B cell (primary cell): ENCODE measurements at regions of chr9 and their contacts with region 1.

Region 1: DNA sequence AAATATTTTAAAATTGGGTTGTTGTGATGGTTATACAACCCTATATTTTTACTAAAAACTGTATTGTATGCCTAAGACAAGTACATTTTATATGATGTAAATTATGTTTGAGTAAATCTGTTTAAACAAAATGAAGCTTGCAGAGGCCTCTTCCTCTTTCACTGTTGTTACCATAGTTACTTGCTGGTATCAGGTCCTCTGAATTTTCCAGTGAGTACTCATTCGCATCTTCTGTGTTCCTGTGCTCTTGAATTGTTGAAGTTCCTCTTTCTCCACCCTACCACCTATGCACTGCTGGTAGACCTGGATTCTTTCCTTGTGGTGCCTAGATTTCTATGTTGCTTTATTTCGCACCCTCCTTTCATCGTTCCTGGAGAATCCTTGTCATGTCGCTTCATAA is 938.5 kb upstream of the ACO1 start:
- DNase-seq: peak; percentile 62
- ATAC-seq: peak; percentile 82
- H3K4me3 ChIP-seq: no peak overlapping the region
- H3K4me3 Mint-ChIP-seq: peak overlapping the region; percentile 23
- H3K27ac ChIP-seq: peak overlapping the region; percentile 16 to 24
- H3K27ac Mint-ChIP-seq: peak overlapping the region; percentile 82
- H3K4me1 ChIP-seq: peaks cover 12 to 18% of the 10 kb centered on the region in 2 donors
- H3K4me1 Mint-ChIP-seq: peaks cover 22% of the 10 kb centered on the region
- H3K27me3 ChIP-seq: no peaks in the 10 kb centered on the region
- H3K27me3 Mint-ChIP-seq: no peaks in the 10 kb centered on the region
- CTCF ChIP-seq: no peak

Region 2: GRCh38 chr9:31259824-31260223 is 186.1 kb before region 1 on chr9:
- CTCF ChIA-PET with region 1: no interaction called
- POLR2A ChIA-PET with region 1: no interaction called
- intact Hi-C with region 1: loop called (anchors 10 kb)
- DNase-seq: no peak
- ATAC-seq: no peak
- H3K4me3 ChIP-seq: no peak overlapping the region
- H3K4me3 Mint-ChIP-seq: no peak overlapping the region
- H3K27ac ChIP-seq: no peak overlapping the region
- H3K27ac Mint-ChIP-seq: no peak overlapping the region
- H3K4me1 ChIP-seq: no peaks in the 10 kb centered on the region
- H3K4me1 Mint-ChIP-seq: no peaks in the 10 kb centered on the region
- H3K27me3 ChIP-seq: no peaks in the 10 kb centered on the region
- H3K27me3 Mint-ChIP-seq: no peaks in the 10 kb centered on the region
- CTCF ChIP-seq: no peak

Region 3: DNA sequence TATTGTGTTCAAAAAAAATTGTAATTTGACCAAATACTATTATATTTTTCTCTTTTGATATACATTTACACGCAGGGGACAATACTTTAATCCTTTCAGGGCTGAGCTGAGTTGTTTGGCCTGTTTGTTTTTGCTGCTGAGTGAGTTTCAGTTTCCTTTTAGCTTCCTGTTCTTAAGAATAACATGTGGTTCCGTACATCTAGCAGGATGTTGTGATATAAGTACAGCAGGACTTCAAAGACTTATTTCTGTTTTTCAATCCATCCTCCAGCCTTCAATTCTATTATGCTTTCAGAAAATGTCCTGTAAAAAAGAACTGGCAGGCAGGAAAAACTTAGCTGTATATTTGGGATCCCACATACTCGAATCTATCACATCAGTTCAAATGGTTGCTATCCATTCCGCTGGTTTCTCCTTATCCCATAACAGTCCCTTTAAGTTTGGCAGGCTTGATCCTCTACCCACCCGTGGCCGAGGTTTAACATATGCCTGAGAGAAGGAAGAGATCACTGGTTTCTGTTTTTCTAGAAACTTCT is 98.8 kb before region 1 on chr9:
- CTCF ChIA-PET with region 1: no interaction called
- POLR2A ChIA-PET with region 1: no interaction called
- intact Hi-C with region 1: loop called (anchors 10 kb)
- DNase-seq: peak; percentile 75
- ATAC-seq: peak; percentile 86
- H3K4me3 ChIP-seq: peak overlapping the region in 1 of 5 experiments; percentile 40
- H3K4me3 Mint-ChIP-seq: peak overlapping the region; percentile 77
- H3K27ac ChIP-seq: peak overlapping the region; percentile 83 to 84
- H3K27ac Mint-ChIP-seq: peak overlapping the region; percentile 91
- H3K4me1 ChIP-seq: peaks cover 9 to 38% of the 10 kb centered on the region in 2 donors
- H3K4me1 Mint-ChIP-seq: peaks cover 29% of the 10 kb centered on the region
- H3K27me3 ChIP-seq: no peaks in the 10 kb centered on the region
- H3K27me3 Mint-ChIP-seq: no peaks in the 10 kb centered on the region
- CTCF ChIP-seq: no peak

Region 4: GRCh38 chr9:31377358-31377757 is 68.6 kb before region 1 on chr9:
- CTCF ChIA-PET with region 1: no interaction called
- POLR2A ChIA-PET with region 1: no interaction called
- intact Hi-C with region 1: no loop called
- DNase-seq: no peak
- ATAC-seq: no peak
- H3K4me3 ChIP-seq: no peak overlapping the region
- H3K4me3 Mint-ChIP-seq: no peak overlapping the region
- H3K27ac ChIP-seq: no peak overlapping the region
- H3K27ac Mint-ChIP-seq: no peak overlapping the region
- H3K4me1 ChIP-seq: no peaks in the 10 kb centered on the region
- H3K4me1 Mint-ChIP-seq: no peaks in the 10 kb centered on the region
- H3K27me3 ChIP-seq: no peaks in the 10 kb centered on the region
- H3K27me3 Mint-ChIP-seq: no peaks in the 10 kb centered on the region
- CTCF ChIP-seq: no peak